ENCODE measurements at regions of chr9 and their contacts with region 1.

Region 1: DNA sequence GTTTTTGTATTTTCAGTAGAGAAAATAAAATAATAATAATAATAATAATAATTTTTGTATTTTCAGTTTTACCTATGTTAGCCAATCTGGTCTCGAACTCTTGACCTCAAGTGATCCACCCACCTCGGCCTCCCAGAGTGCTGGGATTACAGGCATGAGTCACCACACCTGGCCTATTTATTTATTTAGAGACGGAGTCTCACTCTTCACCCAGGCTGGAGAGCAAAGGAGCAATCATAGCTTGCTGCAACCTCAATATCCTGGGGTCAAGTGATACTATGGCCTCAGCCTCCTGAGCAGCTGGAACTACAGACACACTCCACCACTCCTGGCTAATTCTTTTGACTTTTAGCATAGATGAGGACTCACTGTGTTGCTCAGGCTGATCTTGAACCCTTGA is 167.5 kb downstream of the TLE1 start:
- DNase-seq: no peak
- H3K4me3 ChIP-seq: no peak overlapping the region
- H3K27ac ChIP-seq: no peak overlapping the region
- H3K4me1 ChIP-seq: no peaks in the 10 kb centered on the region
- CTCF ChIP-seq: no peak

Region 2: GRCh38 chr9:80932181-80932580 is 589.7 kb before region 1 on chr9:
- CTCF ChIA-PET with region 1: no interaction called
- POLR2A ChIA-PET with region 1: no interaction called
- intact Hi-C with region 1: no loop called
- DNase-seq: no peak
- H3K4me3 ChIP-seq: no peak overlapping the region
- H3K27ac ChIP-seq: no peak overlapping the region
- H3K4me1 ChIP-seq: no peaks in the 10 kb centered on the region
- CTCF ChIP-seq: no peak

Region 3: DNA sequence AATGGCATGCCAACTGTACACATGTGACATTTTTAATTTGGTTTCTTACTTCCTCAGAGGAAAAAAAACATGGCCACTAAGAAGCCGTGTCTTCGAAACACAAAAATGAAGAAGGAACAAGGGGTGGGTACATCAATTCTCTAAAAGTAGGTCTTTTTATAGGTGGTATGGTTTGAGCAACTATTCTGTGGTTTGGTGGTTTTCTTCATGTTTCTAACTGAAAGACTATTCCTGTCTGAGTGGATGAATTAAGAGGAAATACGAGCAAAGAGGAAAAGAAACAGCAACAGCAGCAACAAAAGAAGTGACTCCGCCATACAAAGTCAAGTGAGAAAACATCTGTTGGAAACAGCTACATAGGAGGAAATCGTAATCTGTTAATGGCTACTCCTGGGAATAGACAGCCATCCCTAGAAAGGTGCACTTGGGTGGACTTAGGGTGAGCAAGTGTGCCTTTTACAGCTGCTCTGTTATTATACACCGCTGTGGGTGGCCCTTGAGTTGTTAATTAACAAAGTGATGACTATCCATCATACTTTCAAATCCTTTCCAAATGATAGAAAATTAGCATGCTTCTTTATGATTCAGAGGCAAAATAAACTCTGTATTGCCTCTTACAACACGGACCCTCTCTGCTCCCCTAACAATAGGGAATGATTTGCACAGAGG is 408.3 kb before region 1 on chr9:
- CTCF ChIA-PET with region 1: no interaction called
- POLR2A ChIA-PET with region 1: no interaction called
- intact Hi-C with region 1: no loop called
- DNase-seq: peak; percentile 1
- H3K4me3 ChIP-seq: no peak overlapping the region
- H3K27ac ChIP-seq: no peak overlapping the region
- H3K4me1 ChIP-seq: no peaks in the 10 kb centered on the region
- CTCF ChIP-seq: no peak

Region 4: DNA sequence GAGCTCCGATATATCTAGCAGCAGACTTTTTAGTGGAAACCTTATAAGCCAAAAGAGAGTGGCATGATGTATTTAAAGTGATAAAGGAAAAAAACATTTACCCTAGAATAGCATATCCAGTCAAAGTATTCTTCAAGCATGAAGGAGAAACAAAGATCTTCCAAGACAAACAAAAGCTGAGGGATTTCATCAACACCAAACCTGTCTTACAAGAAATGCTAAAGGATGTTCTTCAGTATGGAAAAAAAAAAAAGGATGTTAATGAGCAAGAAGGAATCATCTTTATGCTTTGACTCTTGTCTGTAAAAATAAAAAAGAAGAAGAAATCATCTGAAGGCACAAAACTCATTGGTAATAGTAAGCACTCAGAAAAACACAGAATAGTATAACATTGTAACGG is 170.7 kb before region 1 on chr9:
- CTCF ChIA-PET with region 1: no interaction called
- POLR2A ChIA-PET with region 1: no interaction called
- intact Hi-C with region 1: no loop called
- DNase-seq: no peak
- H3K4me3 ChIP-seq: no peak overlapping the region
- H3K27ac ChIP-seq: no peak overlapping the region
- H3K4me1 ChIP-seq: no peaks in the 10 kb centered on the region
- CTCF ChIP-seq: no peak

Region 5: GRCh38 chr9:82606492-82607382 is 1084.8 kb after region 1 on chr9:
- CTCF ChIA-PET with region 1: no interaction called
- POLR2A ChIA-PET with region 1: no interaction called
- intact Hi-C with region 1: loop called (anchors 5 kb)
- DNase-seq: peak; percentile 64
- H3K4me3 ChIP-seq: no peak overlapping the region
- H3K27ac ChIP-seq: no peak overlapping the region
- H3K4me1 ChIP-seq: no peaks in the 10 kb centered on the region
- CTCF ChIP-seq: peak; percentile 82

Measured in OCI-LY7 (cell line).